ENCODE measurements at regions of chr14 and their contacts with region 1.

Region 1: GRCh38 chr14:59132796-59133494 is 55.5 kb upstream of the DAAM1 start:
- DNase-seq: no peak
- ATAC-seq: peak; percentile 29
- H3K4me3 ChIP-seq: no peak overlapping the region
- H3K27ac ChIP-seq: no peak overlapping the region
- H3K4me1 ChIP-seq: peaks cover 0 to 6% of the 10 kb centered on the region in 2 donors
- H3K27me3 ChIP-seq: no peaks in the 10 kb centered on the region

Region 2: GRCh38 chr14:59032826-59033225 is 100.1 kb before region 1 on chr14:
- intact Hi-C with region 1: no loop called
- DNase-seq: no peak
- ATAC-seq: no peak
- H3K4me3 ChIP-seq: no peak overlapping the region
- H3K27ac ChIP-seq: no peak overlapping the region
- H3K4me1 ChIP-seq: no peaks in the 10 kb centered on the region
- H3K27me3 ChIP-seq: no peaks in the 10 kb centered on the region

Region 3: GRCh38 chr14:59161561-59162175 is 28.7 kb after region 1 on chr14:
- intact Hi-C with region 1: loop called in 1 of 2 experiments (anchors 2 kb)
- DNase-seq: peak in 1 of 2 donors; percentile 54
- ATAC-seq: peak; percentile 74
- H3K4me3 ChIP-seq: peak overlapping the region in 1 of 2 donors; percentile 3
- H3K27ac ChIP-seq: peak overlapping the region; percentile 55 to 73
- H3K4me1 ChIP-seq: peaks cover 0 to 4% of the 10 kb centered on the region in 2 donors
- H3K27me3 ChIP-seq: no peaks in the 10 kb centered on the region

Region 4: DNA sequence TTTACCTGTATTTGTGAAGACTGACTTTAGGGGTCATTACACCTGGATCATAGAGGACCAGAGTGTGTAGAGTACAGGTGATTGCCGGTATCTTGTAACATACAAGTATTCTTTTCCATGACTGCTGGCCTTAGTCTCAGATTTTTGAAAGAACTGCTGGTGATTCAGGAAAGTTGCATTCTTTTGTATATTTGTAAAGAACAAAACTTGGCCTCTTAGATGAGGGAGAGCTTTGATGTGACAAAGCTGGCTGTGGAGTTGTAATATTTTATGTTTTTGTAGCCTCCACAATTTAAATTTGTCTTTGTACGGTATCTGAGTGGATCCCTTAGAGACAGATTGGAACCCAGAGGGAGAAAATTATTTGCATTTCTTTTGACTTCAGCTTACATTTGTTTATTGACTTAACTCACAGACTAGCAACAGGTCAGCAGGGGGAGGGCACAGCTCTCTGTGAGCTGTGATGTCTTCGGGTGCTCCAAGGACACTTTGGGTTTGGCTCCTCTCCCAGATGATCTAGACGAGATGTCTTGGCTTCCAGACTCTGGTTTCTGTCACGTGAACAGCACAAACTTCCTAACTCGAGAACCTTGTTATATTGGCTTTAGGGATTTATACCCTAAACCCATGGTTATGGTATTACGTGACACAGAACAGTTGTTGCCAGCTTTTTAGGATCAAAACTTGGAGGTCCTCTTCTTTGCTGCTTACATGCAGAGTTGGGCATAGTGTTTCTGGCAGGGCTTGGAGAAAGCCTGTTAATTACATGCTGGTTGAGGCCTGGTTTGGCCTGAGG is 121.4 kb after region 1 on chr14:
- intact Hi-C with region 1: loop called in 1 of 2 experiments (anchors 10 kb)
- DNase-seq: peak in 1 of 2 donors; percentile 79
- ATAC-seq: peak; percentile 85
- H3K4me3 ChIP-seq: no peak overlapping the region
- H3K27ac ChIP-seq: peak overlapping the region; percentile 68 to 97
- H3K4me1 ChIP-seq: peaks cover 20 to 26% of the 10 kb centered on the region in 2 donors
- H3K27me3 ChIP-seq: no peaks in the 10 kb centered on the region

Region 5: DNA sequence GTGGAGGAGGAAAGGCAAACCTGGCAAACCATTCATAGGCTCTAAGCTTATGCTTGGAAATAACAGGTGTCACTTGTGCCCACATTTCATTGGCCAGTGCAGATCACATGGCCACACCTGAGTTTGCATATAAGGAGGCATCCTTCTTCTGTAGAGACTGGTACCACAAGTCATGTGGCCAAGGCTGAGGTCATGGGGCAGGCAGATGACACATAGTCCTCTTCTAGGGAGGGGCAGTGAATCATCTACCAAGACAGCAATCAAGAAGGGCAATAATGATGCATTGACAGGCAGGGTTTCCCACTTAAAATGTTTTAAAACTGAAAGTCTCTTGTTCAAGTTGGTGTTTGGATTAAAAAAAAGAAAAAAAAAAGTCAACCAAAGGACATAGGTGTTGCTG is 132.9 kb after region 1 on chr14:
- intact Hi-C with region 1: no loop called
- DNase-seq: no peak
- ATAC-seq: no peak
- H3K4me3 ChIP-seq: no peak overlapping the region
- H3K27ac ChIP-seq: no peak overlapping the region
- H3K4me1 ChIP-seq: peaks cover 4 to 6% of the 10 kb centered on the region in 2 donors
- H3K27me3 ChIP-seq: no peaks in the 10 kb centered on the region

Measured in aorta (tissue), 5 donors.